Heart left ventricle (tissue), 16 donors: ENCODE measurements at regions of chr2 and their contacts with region 1.

Region 1: DNA sequence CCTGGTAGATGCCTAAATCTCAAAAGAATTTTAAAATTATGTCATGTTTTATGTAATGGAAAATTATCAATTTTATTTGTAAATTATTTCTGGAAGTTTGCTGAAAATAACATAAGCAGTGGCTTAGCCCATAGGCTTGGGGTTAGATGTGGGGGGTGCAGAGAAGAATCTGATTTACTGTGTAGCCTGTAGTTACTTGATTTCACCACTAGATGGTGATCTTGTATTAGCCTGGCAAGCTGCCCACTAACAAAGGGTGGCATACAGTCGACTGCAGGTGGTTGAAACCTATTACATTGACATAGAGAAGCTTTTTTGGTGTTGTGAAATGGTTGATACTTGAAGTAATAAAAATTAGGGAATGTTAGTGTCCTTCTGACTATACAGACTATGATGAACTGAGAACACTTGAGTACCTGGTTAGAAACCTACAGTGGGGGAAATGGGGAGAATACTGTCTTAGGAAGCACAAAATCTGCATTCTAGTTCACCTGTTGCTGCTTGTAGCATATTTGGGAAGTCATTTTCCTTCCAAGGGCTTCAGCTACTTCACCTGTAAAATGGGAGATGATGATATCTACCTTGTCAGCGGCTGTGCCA is 191.0 kb upstream of the LHCGR start:
- DNase-seq: peak in 2 of 5 donors; percentile 21 to 33
- ATAC-seq: peak; percentile 59 to 86 (median 78)
- H3K4me3 ChIP-seq: no peak overlapping the region
- H3K27ac ChIP-seq: no peak overlapping the region
- H3K4me1 ChIP-seq: peaks cover 0 to 16% (median 0%) of the 10 kb centered on the region in 12 donors
- H3K27me3 ChIP-seq: no peaks in the 10 kb centered on the region
- CTCF ChIP-seq: peak; percentile 83 to 94 (median 91)
- POLR2A ChIP-seq: no peak

Region 2: DNA sequence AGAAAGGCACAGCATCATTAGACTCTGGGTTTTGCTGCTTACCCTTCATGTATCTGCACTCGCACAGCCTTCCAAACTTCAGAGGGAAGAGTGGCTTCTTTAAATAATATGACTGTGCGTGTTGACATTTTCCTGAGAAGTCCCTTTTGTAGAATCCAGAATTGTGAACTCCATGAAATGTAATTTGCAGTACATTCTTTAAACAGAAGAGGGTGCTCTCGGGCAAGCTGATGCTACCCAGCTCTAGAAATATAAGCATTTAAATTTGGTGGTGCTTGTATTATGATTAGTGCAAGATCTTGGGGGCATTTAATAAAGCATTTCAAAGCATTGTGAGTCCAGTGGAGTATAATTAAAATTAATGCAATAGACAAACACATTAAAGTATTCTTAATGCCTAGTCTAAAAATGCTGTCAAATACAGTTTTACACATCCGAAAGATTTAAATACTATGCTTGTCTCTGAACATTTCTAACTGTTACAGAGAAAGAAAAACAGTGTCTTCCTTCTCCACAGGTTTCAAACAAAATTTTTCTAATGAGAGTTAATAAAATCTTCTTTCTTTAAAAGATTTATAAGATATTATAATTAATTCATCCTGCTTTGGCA is 346.2 kb before region 1 on chr2:
- intact Hi-C with region 1: loop called in 2 of 10 experiments (anchors 10 kb)
- DNase-seq: no peak
- ATAC-seq: peak in 2 of 4 donors; percentile 39 to 63
- H3K4me3 ChIP-seq: no peak overlapping the region
- H3K27ac ChIP-seq: no peak overlapping the region
- H3K4me1 ChIP-seq: no peaks in the 10 kb centered on the region
- H3K27me3 ChIP-seq: no peaks in the 10 kb centered on the region
- CTCF ChIP-seq: peak; percentile 51 to 80 (median 66)
- POLR2A ChIP-seq: no peak

Region 3: GRCh38 chr2:48900321-48901015 is 46.1 kb before region 1 on chr2:
- intact Hi-C with region 1: no loop called
- DNase-seq: no peak
- ATAC-seq: no peak
- H3K4me3 ChIP-seq: no peak overlapping the region
- H3K27ac ChIP-seq: no peak overlapping the region
- H3K4me1 ChIP-seq: no peaks in the 10 kb centered on the region
- H3K27me3 ChIP-seq: no peaks in the 10 kb centered on the region
- CTCF ChIP-seq: no peak
- POLR2A ChIP-seq: no peak

Region 4: DNA sequence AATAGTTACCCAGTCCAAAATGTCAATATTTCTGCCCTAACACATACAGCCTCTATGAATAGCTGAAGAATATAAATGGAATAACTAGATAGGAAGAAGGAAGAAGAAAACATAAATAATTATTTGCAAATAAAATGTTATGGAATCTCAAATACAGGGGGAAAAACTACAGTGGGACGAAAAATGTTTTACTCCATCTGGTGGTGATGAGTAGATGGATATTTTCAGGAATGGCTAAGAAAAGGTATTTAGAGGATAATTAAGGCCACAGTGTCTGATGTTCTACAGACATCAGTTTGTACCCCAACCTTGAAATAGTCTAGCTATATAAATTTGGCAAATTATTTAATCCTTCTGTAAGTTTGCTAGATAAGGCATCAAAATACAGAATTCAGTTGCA is 385.9 kb after region 1 on chr2:
- intact Hi-C with region 1: loop called in 3 of 10 experiments (anchors 2 to 10 kb)
- DNase-seq: no peak
- ATAC-seq: no peak
- H3K4me3 ChIP-seq: no peak overlapping the region
- H3K27ac ChIP-seq: no peak overlapping the region
- H3K4me1 ChIP-seq: no peaks in the 10 kb centered on the region
- H3K27me3 ChIP-seq: no peaks in the 10 kb centered on the region
- CTCF ChIP-seq: peak in 2 of 12 donors; percentile 24 to 29
- POLR2A ChIP-seq: no peak

Region 5: DNA sequence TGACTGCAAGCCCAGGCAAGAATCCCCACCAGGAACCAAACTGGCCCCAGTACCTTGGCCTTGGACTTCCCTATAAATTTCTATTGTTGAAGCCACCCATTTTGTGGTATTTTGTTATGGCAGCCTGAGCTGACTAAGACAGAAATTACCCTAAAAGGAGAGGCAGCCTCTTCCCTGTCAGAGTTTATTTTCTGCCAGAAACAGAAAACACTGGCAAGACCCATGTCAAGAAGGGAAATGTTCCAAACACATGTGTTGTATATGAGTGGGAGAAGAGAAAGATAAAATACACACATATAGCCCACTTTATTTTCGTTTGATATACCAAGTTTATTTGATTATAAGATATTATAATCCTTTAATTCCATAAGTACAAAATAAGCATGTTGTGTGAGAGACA is 432.9 kb after region 1 on chr2:
- intact Hi-C with region 1: no loop called
- DNase-seq: no peak
- ATAC-seq: no peak
- H3K4me3 ChIP-seq: no peak overlapping the region
- H3K27ac ChIP-seq: no peak overlapping the region
- H3K4me1 ChIP-seq: no peaks in the 10 kb centered on the region
- H3K27me3 ChIP-seq: no peaks in the 10 kb centered on the region
- CTCF ChIP-seq: no peak
- POLR2A ChIP-seq: no peak

Region 6: DNA sequence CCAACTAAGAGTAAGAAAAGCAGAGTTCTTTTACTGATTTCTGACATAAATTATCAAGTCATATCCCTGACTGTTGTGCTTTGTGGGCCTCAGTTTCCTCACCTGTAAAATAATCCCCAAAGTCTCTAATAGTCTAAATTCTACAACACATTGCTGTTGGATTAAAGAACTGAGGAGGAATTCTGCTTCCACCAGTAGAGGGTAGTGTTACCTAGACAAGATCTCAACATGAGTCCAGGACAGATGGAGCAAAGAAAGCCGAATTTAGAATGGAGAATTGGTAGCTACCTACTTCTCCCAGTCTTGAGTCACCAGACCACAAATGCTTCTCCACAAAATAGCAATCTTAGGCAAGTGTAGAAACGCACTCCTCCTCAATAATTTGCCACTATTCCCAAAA is 670.3 kb after region 1 on chr2:
- intact Hi-C with region 1: loop called in 1 of 10 experiments (anchors 10 kb)
- DNase-seq: no peak
- ATAC-seq: peak in 1 of 4 donors; percentile 36
- H3K4me3 ChIP-seq: no peak overlapping the region
- H3K27ac ChIP-seq: no peak overlapping the region
- H3K4me1 ChIP-seq: no peaks in the 10 kb centered on the region
- H3K27me3 ChIP-seq: no peaks in the 10 kb centered on the region
- CTCF ChIP-seq: peak in 10 of 12 donors; percentile 16 to 57 (median 42)
- POLR2A ChIP-seq: no peak

Region 7: DNA sequence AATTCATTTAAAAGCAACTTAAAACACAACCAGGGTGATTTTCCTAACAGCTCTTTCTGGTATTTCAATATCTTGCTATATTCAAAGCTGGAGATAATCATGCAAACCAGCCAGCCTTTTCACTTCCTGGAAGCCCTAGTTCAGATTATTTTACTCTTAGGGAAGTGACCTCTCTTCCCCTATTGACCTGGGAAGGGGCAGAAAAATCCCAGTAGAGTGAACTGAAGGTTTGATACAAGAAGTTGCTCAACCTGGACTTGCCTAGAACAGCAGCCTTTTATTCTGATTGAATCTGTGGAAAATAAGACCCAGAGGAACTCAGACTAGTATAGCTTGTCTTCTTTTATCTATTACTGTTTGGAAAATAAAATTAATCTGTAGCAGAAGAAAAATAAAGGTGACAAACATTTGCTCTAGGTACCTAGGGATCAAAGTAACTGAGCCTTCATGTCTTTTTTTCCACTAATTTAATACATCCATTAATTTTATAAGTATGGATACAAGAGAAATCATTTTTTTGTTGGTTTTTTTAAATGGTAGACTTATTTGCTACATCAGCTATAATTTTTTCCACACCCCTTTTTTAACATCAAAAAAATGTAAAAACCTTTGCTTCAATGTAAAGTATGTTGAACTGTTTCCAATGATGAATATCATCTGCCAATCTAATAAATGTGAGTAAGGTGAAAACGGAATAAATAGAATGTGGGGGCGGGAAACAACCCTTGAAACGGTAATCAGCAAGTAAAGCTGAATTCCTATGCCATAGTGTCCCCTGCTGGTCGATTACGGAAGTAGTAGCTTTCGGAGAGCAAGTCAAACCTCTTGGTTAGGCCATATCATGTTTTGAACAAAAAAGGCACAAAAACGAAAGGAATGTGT is 1455.5 kb after region 1 on chr2:
- intact Hi-C with region 1: loop called in 3 of 10 experiments (anchors 10 kb)
- DNase-seq: peak in 1 of 5 donors; percentile 17
- ATAC-seq: no peak
- H3K4me3 ChIP-seq: no peak overlapping the region
- H3K27ac ChIP-seq: no peak overlapping the region
- H3K4me1 ChIP-seq: no peaks in the 10 kb centered on the region
- H3K27me3 ChIP-seq: peaks cover 0 to 8% (median 0%) of the 10 kb centered on the region in 9 donors
- CTCF ChIP-seq: peak; percentile 46 to 74 (median 64)
- POLR2A ChIP-seq: no peak